T-cell (primary cell): ENCODE measurements at regions of chr4 and their contacts with region 1.

Region 1: GRCh38 chr4:55157559-55158277 is 32.3 kb upstream of the KDR start:
- DNase-seq: no peak
- ATAC-seq: no peak
- H3K4me3 ChIP-seq: no peak overlapping the region
- H3K4me3 Mint-ChIP-seq: no peak overlapping the region
- H3K27ac ChIP-seq: no peak overlapping the region
- H3K27ac Mint-ChIP-seq: no peak overlapping the region
- H3K4me1 ChIP-seq: peaks cover 0 to 3% of the 10 kb centered on the region in 2 experiments
- H3K4me1 Mint-ChIP-seq: no peaks in the 10 kb centered on the region
- H3K27me3 ChIP-seq: peaks cover 5 to 13% of the 10 kb centered on the region in 2 experiments
- H3K27me3 Mint-ChIP-seq: peaks cover 19 to 51% of the 10 kb centered on the region in 2 donors

Region 2: DNA sequence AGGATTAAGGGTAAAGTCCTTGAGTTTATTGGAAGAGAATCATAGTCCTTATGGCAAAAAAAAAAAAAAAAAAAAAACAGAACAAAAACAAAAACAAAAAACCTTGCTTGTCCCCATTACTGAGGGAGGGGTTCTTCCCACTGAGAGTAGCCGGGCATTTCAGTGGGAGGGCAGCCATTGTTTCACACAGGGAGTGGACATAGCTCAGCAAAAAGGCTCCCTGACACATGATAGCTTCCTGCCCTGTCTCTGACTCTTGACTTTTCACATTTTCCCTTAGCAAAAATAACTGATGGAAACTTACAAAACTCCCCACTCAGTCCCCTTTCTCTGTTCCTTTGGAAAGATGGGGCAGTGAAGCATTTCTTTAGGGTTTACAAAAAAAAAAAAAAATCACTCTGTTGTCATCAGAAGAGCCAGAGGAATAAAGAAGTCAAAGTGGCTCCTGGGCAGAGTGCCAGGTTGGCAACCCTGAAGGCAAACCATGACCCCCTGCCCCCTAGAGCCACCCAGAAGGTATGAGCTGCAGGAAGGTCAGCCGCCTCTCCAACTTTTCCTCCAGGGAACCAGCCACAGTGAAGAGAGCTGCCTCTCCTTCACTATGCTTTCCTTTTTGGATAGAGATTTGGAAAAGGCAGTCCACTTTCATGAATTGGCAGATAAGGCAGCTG is 202.9 kb before region 1 on chr4:
- CTCF ChIA-PET with region 1: no interaction called
- POLR2A ChIA-PET with region 1: interaction called in 1 of 2 experiments, 14 read pairs
- DNase-seq: no peak
- ATAC-seq: no peak
- H3K4me3 ChIP-seq: no peak overlapping the region
- H3K4me3 Mint-ChIP-seq: no peak overlapping the region
- H3K27ac ChIP-seq: no peak overlapping the region
- H3K27ac Mint-ChIP-seq: no peak overlapping the region
- H3K4me1 ChIP-seq: peaks cover 8 to 12% of the 10 kb centered on the region in 2 experiments
- H3K4me1 Mint-ChIP-seq: peaks cover 8 to 25% (median 18%) of the 10 kb centered on the region in 3 donors
- H3K27me3 ChIP-seq: no peaks in the 10 kb centered on the region
- H3K27me3 Mint-ChIP-seq: no peaks in the 10 kb centered on the region

Region 3: DNA sequence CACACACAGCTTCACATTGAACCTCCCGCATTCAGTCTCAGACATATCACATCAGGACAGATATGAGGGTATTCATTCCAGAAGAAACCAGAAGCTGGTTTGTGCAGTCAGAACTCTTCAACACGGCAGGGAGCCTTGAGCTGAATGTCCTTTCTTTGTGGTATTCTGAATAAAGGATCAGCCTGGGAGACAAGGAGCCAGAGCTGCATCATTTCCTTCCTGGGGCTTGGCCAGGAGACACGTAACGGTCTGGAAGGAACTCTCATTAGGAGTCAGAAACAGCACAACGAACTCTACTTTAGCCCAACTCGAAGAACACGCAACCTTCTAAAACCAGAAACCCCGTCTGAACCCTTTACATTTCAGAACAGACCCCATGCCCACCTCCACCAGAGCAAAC is 78.7 kb before region 1 on chr4:
- CTCF ChIA-PET with region 1: no interaction called
- POLR2A ChIA-PET with region 1: no interaction called
- DNase-seq: no peak
- ATAC-seq: no peak
- H3K4me3 ChIP-seq: no peak overlapping the region
- H3K4me3 Mint-ChIP-seq: no peak overlapping the region
- H3K27ac ChIP-seq: no peak overlapping the region
- H3K27ac Mint-ChIP-seq: no peak overlapping the region
- H3K4me1 ChIP-seq: no peaks in the 10 kb centered on the region
- H3K4me1 Mint-ChIP-seq: no peaks in the 10 kb centered on the region
- H3K27me3 ChIP-seq: peaks cover 0 to 4% of the 10 kb centered on the region in 2 experiments
- H3K27me3 Mint-ChIP-seq: peaks cover 17% of the 10 kb centered on the region in 2 donors

Region 4: DNA sequence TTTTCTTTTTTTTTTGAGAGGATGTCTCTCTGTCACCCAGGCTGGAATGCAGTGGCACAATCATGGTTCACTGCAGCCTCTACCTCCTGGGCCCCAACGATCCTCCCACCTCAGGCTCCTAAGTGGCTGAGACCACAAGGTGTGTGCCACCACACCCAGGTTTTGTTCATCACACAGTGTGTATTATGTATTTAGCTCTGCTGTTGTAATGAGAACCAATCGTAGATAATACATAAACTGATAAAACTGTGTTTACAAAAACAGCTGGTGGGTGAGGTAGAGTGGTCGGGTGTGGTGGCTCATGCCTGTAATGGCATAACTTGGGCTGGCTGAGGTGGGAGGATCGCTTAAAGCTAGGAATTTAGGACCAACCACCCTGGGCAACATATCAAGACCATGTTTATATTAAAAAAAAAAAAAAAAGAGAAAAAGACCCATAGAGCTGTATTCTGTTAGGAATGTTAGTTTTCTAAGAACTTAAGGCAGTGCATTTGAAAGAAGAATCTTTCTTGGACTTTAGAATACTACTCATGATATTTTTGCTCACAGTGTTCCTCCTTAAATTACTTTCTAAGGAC is 1855.9 kb after region 1 on chr4:
- CTCF ChIA-PET with region 1: no interaction called
- POLR2A ChIA-PET with region 1: no interaction called
- DNase-seq: no peak
- ATAC-seq: no peak
- H3K4me3 ChIP-seq: no peak overlapping the region
- H3K4me3 Mint-ChIP-seq: no peak overlapping the region
- H3K27ac ChIP-seq: no peak overlapping the region
- H3K27ac Mint-ChIP-seq: no peak overlapping the region
- H3K4me1 ChIP-seq: no peaks in the 10 kb centered on the region
- H3K4me1 Mint-ChIP-seq: peaks cover 0 to 11% (median 2%) of the 10 kb centered on the region in 3 donors
- H3K27me3 ChIP-seq: no peaks in the 10 kb centered on the region
- H3K27me3 Mint-ChIP-seq: no peaks in the 10 kb centered on the region